WTC11 (cell line): ENCODE measurements at regions of chr10 and their contacts with region 1.

Region 1: GRCh38 chr10:114195079-114195478 is 15.9 kb downstream of the TDRD1 start:
- DNase-seq: no peak
- ATAC-seq: no peak
- H3K4me3 Mint-ChIP-seq: no peak overlapping the region
- H3K27ac Mint-ChIP-seq: no peak overlapping the region
- H3K4me1 Mint-ChIP-seq: no peaks in the 10 kb centered on the region
- H3K27me3 Mint-ChIP-seq: no peaks in the 10 kb centered on the region
- CTCF ChIP-seq: no peak

Region 2: GRCh38 chr10:112896273-112896672 is 1298.8 kb before region 1 on chr10:
- CTCF ChIA-PET with region 1: no interaction called
- POLR2A ChIA-PET with region 1: interaction called, 15 read pairs
- DNase-seq: no peak
- ATAC-seq: no peak
- H3K4me3 Mint-ChIP-seq: no peak overlapping the region
- H3K27ac Mint-ChIP-seq: no peak overlapping the region
- H3K4me1 Mint-ChIP-seq: peaks cover 30% of the 10 kb centered on the region
- H3K27me3 Mint-ChIP-seq: peaks cover 13% of the 10 kb centered on the region
- CTCF ChIP-seq: no peak